ENCODE measurements at regions of chr12 and their contacts with region 1.

Region 1: GRCh38 chr12:121626087-121626852 is at the start of gene ORAI1:
- DNase-seq: peak; percentile 98
- ATAC-seq: peak; percentile 70
- H3K4me3 Mint-ChIP-seq: peak within 1 kb of the TSS; percentile 94
- H3K27ac Mint-ChIP-seq: peak within 1 kb of the TSS; percentile 96
- H3K4me1 Mint-ChIP-seq: peaks cover 53% of the 10 kb centered on the region
- H3K27me3 Mint-ChIP-seq: no peaks in the 10 kb centered on the region
- CTCF ChIP-seq: no peak
- total RNA-seq, gene ORAI1: 85.8 and 86.3 TPM in 2 replicates

Region 2: GRCh38 chr12:121089031-121089812 is 537.0 kb before region 1 on chr12:
- CTCF ChIA-PET with region 1: no interaction called
- POLR2A ChIA-PET with region 1: no interaction called
- intact Hi-C with region 1: no loop called
- DNase-seq: no peak
- ATAC-seq: no peak
- H3K4me3 Mint-ChIP-seq: no peak overlapping the region
- H3K27ac Mint-ChIP-seq: no peak overlapping the region
- H3K4me1 Mint-ChIP-seq: peaks cover 15% of the 10 kb centered on the region
- H3K27me3 Mint-ChIP-seq: peaks cover 3% of the 10 kb centered on the region
- CTCF ChIP-seq: no peak

Region 3: GRCh38 chr12:121110211-121110940 is 515.9 kb before region 1 on chr12:
- CTCF ChIA-PET with region 1: no interaction called
- POLR2A ChIA-PET with region 1: no interaction called
- intact Hi-C with region 1: no loop called
- DNase-seq: peak; percentile 31
- ATAC-seq: peak; percentile 89
- H3K4me3 Mint-ChIP-seq: no peak overlapping the region
- H3K27ac Mint-ChIP-seq: no peak overlapping the region
- H3K4me1 Mint-ChIP-seq: peaks cover 4% of the 10 kb centered on the region
- H3K27me3 Mint-ChIP-seq: no peaks in the 10 kb centered on the region
- CTCF ChIP-seq: peak; percentile 50

Region 4: DNA sequence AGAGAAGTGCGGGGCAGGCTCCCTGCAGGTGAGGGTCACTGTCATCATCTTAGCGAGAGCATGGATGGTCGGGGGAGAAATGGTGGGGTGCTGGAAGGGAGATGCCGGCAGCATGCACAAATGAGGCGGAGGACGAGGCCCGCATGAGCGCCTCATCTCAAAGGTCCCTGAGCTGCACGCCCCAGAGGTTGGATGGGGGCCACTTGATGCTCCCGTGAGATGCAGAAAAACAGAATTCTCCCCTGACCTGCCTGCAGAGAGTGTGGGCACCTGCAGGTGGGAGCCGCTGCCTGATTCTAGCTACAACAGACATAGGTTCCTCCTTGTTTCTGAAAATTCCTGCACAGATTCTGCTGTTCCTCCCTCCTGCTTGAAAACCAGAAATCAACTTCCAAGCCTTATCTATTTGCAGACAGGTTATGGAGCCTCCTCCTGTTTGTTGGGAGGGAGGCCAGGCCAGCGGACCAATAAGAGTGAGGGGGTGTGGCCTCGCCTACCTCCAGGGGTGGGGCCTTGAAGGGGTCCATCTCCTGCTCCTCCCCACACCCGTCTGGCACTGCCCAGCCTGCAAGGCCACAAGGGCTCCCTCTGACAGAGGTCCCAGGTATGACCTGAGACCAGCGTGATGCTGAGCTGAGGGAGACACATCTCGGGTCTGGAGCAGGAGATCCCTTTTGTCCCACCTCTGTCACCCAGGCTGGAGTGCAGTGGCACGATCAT is 112.6 kb before region 1 on chr12:
- CTCF ChIA-PET with region 1: no interaction called
- POLR2A ChIA-PET with region 1: interaction called, 8 read pairs
- intact Hi-C with region 1: loop called (anchors 1 kb)
- DNase-seq: no peak
- ATAC-seq: peak; percentile 57
- H3K4me3 Mint-ChIP-seq: peak overlapping the region; percentile 35
- H3K27ac Mint-ChIP-seq: peak overlapping the region; percentile 86
- H3K4me1 Mint-ChIP-seq: peaks cover 23% of the 10 kb centered on the region
- H3K27me3 Mint-ChIP-seq: no peaks in the 10 kb centered on the region
- CTCF ChIP-seq: no peak

Region 5: DNA sequence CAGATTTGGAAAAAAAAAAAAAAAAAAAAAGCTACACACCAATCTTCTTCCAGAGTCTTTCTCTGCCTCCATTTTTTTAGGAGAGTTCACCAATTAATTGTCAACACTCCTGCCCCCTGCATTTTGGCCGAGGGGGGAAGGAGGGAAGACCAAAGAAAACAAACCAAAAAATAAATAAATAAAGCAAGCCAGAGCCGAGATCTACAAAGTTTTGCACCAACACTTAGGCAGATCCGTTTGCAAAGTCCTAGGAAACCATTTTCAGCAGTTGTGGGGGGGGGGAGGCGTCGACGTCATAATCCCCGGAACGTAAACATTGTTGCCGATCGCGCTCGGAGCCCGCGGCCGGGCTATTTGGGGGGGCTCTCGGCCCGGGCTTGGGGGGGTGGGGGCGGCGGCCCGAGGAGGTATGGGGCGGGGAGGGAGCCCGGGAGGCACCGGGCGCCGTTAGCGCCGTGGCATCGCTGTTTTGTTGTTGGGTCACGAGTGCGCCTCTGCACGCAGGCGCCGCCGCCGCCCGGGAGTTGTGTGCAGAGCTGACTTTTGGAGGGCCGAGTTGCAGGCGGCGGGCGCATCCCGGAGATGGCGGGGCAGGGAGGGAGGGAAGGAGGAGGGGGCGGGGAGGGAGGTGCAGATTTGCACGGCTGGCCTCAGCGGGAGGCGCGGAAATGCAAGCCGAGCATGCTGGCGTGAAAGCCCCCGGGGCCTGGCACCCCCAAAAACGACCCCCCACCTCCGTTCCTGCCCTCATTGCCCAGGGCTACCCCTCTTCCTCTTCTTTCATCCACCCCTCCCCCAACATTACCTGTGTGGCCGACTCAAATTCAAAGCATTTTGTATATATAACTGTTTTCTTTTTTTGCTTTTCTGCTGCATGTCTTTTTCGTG is 46.0 kb before region 1 on chr12:
- CTCF ChIA-PET with region 1: interaction called, 16 read pairs
- POLR2A ChIA-PET with region 1: interaction called, 113 read pairs
- intact Hi-C with region 1: loop called (anchors 1 kb)
- DNase-seq: peak; percentile 60
- ATAC-seq: peak; percentile 52
- H3K4me3 Mint-ChIP-seq: peak overlapping the region; percentile 95
- H3K27ac Mint-ChIP-seq: peak overlapping the region; percentile 95
- H3K4me1 Mint-ChIP-seq: peaks cover 45% of the 10 kb centered on the region
- H3K27me3 Mint-ChIP-seq: no peaks in the 10 kb centered on the region
- CTCF ChIP-seq: no peak

Region 6: GRCh38 chr12:121657305-121658008 is 31.2 kb after region 1 on chr12:
- CTCF ChIA-PET with region 1: interaction called, 3 read pairs
- POLR2A ChIA-PET with region 1: interaction called, 15 read pairs
- intact Hi-C with region 1: no loop called
- DNase-seq: no peak
- ATAC-seq: no peak
- H3K4me3 Mint-ChIP-seq: no peak overlapping the region
- H3K27ac Mint-ChIP-seq: peak overlapping the region; percentile 50
- H3K4me1 Mint-ChIP-seq: peaks cover 22% of the 10 kb centered on the region
- H3K27me3 Mint-ChIP-seq: no peaks in the 10 kb centered on the region
- CTCF ChIP-seq: no peak

Region 7: DNA sequence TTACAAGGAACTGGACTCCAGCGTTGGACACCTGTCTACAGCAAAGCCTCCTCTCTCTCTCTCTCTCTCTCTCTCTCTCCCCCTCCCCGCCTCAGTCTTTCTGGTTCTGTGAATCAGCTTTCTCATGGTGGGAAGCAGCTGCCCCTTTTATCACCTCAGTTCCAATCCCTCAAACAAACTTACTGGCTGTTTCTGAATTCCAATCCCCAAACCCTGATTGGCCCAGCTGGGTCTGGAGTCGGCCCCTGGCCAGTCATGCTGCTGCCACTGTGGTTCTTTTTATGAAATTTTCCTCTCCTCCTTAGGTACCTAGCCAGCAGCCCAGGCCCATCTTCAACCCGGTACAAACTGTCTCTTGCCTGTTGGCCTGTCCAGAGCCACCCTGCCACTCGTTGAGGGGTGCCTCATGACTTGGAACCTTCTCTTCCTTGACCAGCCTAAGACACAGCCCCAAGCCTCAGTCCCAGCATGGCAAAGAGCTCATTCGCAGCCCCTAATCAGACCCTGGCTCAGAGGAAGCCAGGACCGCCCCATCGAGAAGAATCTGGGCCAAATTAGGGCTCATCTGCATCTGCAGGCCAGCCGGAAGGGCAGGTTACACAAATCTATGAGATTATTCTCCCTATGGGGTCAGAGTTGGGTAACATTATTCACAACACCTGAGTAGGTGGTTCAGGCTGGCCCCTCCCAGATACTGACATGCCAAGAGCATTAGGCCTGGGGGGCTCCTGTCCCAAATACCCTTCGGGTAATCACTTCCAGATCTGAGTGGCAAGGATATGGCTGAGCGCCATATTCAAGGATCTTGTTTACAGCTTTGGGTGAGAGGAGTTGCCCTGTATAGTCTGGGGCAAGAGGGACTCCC is 52.7 kb after region 1 on chr12:
- CTCF ChIA-PET with region 1: interaction called, 8 read pairs
- POLR2A ChIA-PET with region 1: interaction called, 7 read pairs
- intact Hi-C with region 1: loop called (anchors 1 kb)
- DNase-seq: no peak
- ATAC-seq: no peak
- H3K4me3 Mint-ChIP-seq: no peak overlapping the region
- H3K27ac Mint-ChIP-seq: no peak overlapping the region
- H3K4me1 Mint-ChIP-seq: no peaks in the 10 kb centered on the region
- H3K27me3 Mint-ChIP-seq: no peaks in the 10 kb centered on the region
- CTCF ChIP-seq: no peak

Region 8: DNA sequence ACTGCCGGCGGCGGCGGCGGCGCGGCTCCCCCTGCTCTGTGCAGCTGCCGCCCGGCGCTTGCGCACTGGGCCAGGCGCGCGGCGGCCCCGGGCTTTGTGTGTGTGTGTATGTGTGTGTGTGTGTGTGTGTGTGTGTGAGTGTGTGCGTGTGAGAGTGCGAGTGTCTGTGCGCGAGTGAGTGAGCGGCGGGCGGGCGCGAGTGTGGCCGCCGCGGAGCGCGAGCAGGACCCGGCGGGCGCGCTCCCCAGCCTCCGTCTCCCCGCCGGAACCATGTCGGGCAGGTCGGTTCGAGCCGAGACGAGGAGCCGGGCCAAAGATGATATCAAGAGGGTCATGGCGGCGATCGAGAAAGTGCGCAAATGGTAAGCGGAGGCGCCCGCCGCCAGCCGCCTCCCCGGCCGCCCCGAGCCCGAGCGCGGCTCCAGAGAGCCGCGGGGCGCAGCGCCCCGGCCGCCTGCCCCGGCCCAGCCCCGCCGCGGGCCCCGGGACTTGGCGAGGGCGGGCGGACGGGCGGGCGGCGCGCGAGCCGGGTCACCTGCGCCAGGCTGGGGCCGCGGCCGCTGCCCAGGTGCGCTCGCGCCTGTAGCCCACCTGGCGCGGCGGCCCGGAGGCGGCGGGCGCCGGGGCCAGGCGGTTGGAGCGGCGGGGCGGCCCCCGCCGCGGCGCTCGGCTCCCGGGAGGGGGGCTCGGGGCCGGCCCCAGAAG is 395.7 kb after region 1 on chr12 and contains the start of gene BCL7A:
- CTCF ChIA-PET with region 1: no interaction called
- POLR2A ChIA-PET with region 1: no interaction called
- intact Hi-C with region 1: loop called (anchors 5 kb)
- DNase-seq: peak; percentile 72
- ATAC-seq: peak; percentile 76
- H3K4me3 Mint-ChIP-seq: peak within 1 kb of the TSS; percentile 91
- H3K27ac Mint-ChIP-seq: peak within 1 kb of the TSS; percentile 95
- H3K4me1 Mint-ChIP-seq: peaks cover 46% of the 10 kb centered on the region
- H3K27me3 Mint-ChIP-seq: peaks cover 2% of the 10 kb centered on the region
- CTCF ChIP-seq: no peak
- total RNA-seq, gene BCL7A: 38.6 and 41.4 TPM in 2 replicates

Region 9: GRCh38 chr12:122148657-122149056 is 522.4 kb after region 1 on chr12:
- CTCF ChIA-PET with region 1: no interaction called
- POLR2A ChIA-PET with region 1: no interaction called
- intact Hi-C with region 1: no loop called
- DNase-seq: no peak
- ATAC-seq: no peak
- H3K4me3 Mint-ChIP-seq: no peak overlapping the region
- H3K27ac Mint-ChIP-seq: no peak overlapping the region
- H3K4me1 Mint-ChIP-seq: no peaks in the 10 kb centered on the region
- H3K27me3 Mint-ChIP-seq: peaks cover 4% of the 10 kb centered on the region
- CTCF ChIP-seq: no peak